AG04449 (cell line): ENCODE measurements at regions of chr12 and their contacts with region 1.

Region 1: GRCh38 chr12:109597795-109598427 is 24.3 kb downstream of the MVK start:
- DNase-seq: peak; percentile 7
- H3K4me3 ChIP-seq: no peak overlapping the region; the same call in 1 of the 2 replicates
- CTCF ChIP-seq: peak; percentile 97

Region 2: GRCh38 chr12:109518820-109519665 is 78.9 kb before region 1 on chr12:
- CTCF ChIA-PET with region 1: interaction called, 11 read pairs
- POLR2A ChIA-PET with region 1: no interaction called
- DNase-seq: peak; percentile 67
- H3K4me3 ChIP-seq: no peak overlapping the region
- CTCF ChIP-seq: peak; percentile 77

Region 3: DNA sequence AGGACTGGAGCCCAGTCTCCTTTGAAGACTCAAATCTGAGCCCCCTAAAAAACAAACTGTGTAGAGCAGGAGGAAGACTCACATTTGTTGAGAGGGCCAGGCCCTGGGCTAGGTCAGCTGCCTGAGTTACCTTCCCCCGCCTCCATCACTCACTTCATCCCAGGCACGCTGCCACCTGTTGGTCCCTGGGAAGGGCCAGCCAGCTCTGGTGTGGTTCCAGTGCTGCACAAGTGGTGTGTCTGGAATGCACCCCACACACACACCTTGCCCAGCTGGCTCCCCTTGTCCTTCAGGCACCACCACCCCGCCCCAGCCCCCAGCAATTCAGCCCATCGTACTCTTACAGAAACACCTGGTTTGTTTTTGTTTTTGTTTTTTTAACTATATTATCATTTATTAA is 15.3 kb before region 1 on chr12:
- CTCF ChIA-PET with region 1: interaction called, 83 read pairs
- POLR2A ChIA-PET with region 1: no interaction called
- DNase-seq: no peak
- H3K4me3 ChIP-seq: no peak overlapping the region
- CTCF ChIP-seq: no peak

Region 4: GRCh38 chr12:109713187-109713984 is 115.5 kb after region 1 on chr12 and contains the start of gene FAM222A:
- CTCF ChIA-PET with region 1: interaction called, 23 read pairs
- POLR2A ChIA-PET with region 1: no interaction called
- DNase-seq: peak; percentile 63
- H3K4me3 ChIP-seq: peak within 1 kb of the TSS; percentile 59
- CTCF ChIP-seq: no peak

Region 5: GRCh38 chr12:109770104-109770860 is 172.4 kb after region 1 on chr12:
- CTCF ChIA-PET with region 1: interaction called, 241 read pairs
- POLR2A ChIA-PET with region 1: no interaction called
- DNase-seq: no peak
- H3K4me3 ChIP-seq: no peak overlapping the region
- CTCF ChIP-seq: no peak

Region 6: DNA sequence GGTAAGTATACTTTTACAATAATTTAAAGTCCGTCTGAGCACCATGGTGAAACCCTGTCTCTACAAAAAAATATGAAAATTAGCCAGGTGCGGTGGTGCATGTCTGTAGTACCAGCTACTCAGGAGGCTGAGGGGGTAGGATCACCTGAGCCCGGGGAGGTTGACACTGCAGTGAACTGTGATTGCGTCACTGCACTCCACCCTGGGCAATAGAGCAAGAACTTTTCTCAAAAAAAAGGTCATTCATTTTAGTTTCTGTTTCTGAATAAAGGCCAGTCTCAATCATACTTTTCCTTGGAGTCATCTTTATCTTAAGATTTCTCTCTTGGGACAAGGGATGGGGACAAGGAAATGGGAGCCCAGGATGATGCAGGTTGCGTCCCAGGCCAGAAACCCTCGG is 414.2 kb after region 1 on chr12:
- CTCF ChIA-PET with region 1: no interaction called
- POLR2A ChIA-PET with region 1: no interaction called
- DNase-seq: no peak
- H3K4me3 ChIP-seq: no peak overlapping the region
- CTCF ChIP-seq: no peak